A673 (cell line): ENCODE measurements at regions of chr1 and their contacts with region 1.

Region 1: DNA sequence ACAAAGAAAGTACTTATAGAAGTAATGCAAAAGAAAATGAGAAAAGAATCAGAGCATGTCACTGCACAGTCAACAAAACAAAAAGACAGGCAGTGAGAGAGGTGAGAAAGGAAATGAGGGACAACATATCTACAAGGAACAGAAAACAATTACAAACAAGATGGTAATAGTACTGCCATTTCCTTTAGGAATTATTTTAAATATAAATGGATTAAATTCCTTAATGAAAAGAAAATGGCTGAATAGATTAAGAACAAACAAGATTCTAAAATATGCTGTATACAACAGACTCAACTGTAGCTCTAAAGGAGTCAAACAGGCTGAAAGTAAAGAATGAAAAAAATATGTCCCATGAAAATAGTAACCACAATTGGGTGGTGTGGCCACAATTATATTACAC is 22.1 kb upstream of the ZNF124 start:
- DNase-seq: no peak
- H3K4me3 ChIP-seq: no peak overlapping the region
- H3K27ac ChIP-seq: no peak overlapping the region
- H3K4me1 ChIP-seq: no peaks in the 10 kb centered on the region
- H3K27me3 ChIP-seq: no peaks in the 10 kb centered on the region
- CTCF ChIP-seq: no peak

Region 2: GRCh38 chr1:247007511-247008405 is 186.2 kb before region 1 on chr1 and contains the start of gene ZNF695:
- CTCF ChIA-PET with region 1: no interaction called
- POLR2A ChIA-PET with region 1: interaction called, 13 read pairs
- intact Hi-C with region 1: no loop called
- DNase-seq: peak; percentile 99
- H3K4me3 ChIP-seq: peak within 1 kb of the TSS; percentile 89
- H3K27ac ChIP-seq: peak within 1 kb of the TSS; percentile 84
- H3K4me1 ChIP-seq: no peaks in the 10 kb centered on the region
- H3K27me3 ChIP-seq: no peaks in the 10 kb centered on the region
- CTCF ChIP-seq: no peak
- total RNA-seq, gene ZNF695: 14.1 and 15.9 TPM in 2 replicates

Region 3: GRCh38 chr1:247576495-247576894 is 382.5 kb after region 1 on chr1:
- CTCF ChIA-PET with region 1: no interaction called
- POLR2A ChIA-PET with region 1: no interaction called
- intact Hi-C with region 1: no loop called
- DNase-seq: peak; percentile 34
- H3K4me3 ChIP-seq: no peak overlapping the region
- H3K27ac ChIP-seq: no peak overlapping the region
- H3K4me1 ChIP-seq: no peaks in the 10 kb centered on the region
- H3K27me3 ChIP-seq: peaks cover 5% of the 10 kb centered on the region
- CTCF ChIP-seq: peak; percentile 66